Stomach (tissue), 19 donors: ENCODE measurements at regions of chr6 and their contacts with region 1.

Region 1: GRCh38 chr6:166275714-166276166 is 32.5 kb downstream of the PRR18 start:
- DNase-seq: peak; percentile 82 to 86
- H3K4me3 ChIP-seq: no peak overlapping the region
- H3K27ac ChIP-seq: no peak overlapping the region
- H3K4me1 ChIP-seq: peaks cover 0 to 13% (median 4%) of the 10 kb centered on the region in 4 donors
- H3K27me3 ChIP-seq: peaks cover 0 to 26% (median 3%) of the 10 kb centered on the region in 3 donors
- CTCF ChIP-seq: peak in 5 of 7 experiments; percentile 82 to 99 (median 98)
- EP300 ChIP-seq: no peak
- POLR2A ChIP-seq: no peak

Region 2: DNA sequence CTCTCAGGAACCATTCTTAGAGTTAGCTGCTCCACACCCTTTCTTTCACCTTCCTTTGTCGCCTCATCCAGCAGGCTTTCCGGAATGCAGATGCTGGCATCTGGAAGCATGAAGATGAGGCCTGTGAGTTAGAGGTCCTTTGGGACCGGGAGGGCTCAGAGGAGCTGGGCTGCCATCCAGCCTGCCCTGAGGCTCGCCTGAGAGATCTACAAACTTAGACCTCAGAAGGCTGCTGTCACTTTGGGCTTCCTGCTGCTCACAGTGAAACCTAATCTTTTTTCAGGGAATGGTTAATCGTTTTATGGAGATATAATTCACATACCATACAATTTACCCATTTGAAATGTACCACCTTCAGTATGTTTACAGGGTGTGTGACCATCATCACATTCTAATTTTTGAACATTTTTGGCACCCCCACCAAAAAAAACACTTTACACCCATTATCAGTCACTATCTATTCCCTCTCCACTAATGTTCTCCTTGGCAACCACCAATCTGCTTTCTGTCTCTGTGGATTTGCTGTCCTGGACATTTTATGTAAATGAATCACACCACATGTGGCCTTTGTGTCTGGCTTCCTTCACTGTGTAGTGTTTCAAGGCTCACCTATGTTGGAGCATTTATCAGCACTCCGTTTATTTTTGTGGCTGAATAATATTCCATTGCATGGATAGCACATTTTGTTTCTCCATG is 127.0 kb after region 1 on chr6:
- intact Hi-C with region 1: loop called (anchors 5 kb)
- DNase-seq: no peak
- H3K4me3 ChIP-seq: no peak overlapping the region
- H3K27ac ChIP-seq: no peak overlapping the region
- H3K4me1 ChIP-seq: peaks cover 0 to 9% (median 4%) of the 10 kb centered on the region in 4 donors
- H3K27me3 ChIP-seq: peaks cover 0 to 2% (median 0%) of the 10 kb centered on the region in 3 donors
- CTCF ChIP-seq: no peak
- EP300 ChIP-seq: no peak
- POLR2A ChIP-seq: no peak